Dorsolateral prefrontal cortex (tissue), 120 donors: ENCODE measurements at regions of chr1 and their contacts with region 1.

Region 1: GRCh38 chr1:177256153-177257075 is 85.7 kb downstream of the BRINP2 start:
- DNase-seq: peak in 9 of 10 donors; percentile 55 to 75 (median 65)
- H3K4me3 ChIP-seq: no peak overlapping the region
- H3K27ac ChIP-seq: peak overlapping the region in 37 of 59 donors; percentile 14 to 78 (median 48)
- H3K27me3 ChIP-seq: no peaks in the 10 kb centered on the region
- CTCF ChIP-seq: peak; percentile 28 to 91 (median 72)

Region 2: GRCh38 chr1:177302357-177303044 is 46.1 kb after region 1 on chr1:
- intact Hi-C with region 1: loop called (anchors 5 kb)
- DNase-seq: peak in 8 of 10 donors; percentile 54 to 77 (median 66)
- H3K4me3 ChIP-seq: no peak overlapping the region
- H3K27ac ChIP-seq: peak overlapping the region in 57 of 59 donors; percentile 11 to 98 (median 72)
- H3K27me3 ChIP-seq: no peaks in the 10 kb centered on the region
- CTCF ChIP-seq: peak in 10 of 56 donors; percentile 6 to 26 (median 19)

Region 3: DNA sequence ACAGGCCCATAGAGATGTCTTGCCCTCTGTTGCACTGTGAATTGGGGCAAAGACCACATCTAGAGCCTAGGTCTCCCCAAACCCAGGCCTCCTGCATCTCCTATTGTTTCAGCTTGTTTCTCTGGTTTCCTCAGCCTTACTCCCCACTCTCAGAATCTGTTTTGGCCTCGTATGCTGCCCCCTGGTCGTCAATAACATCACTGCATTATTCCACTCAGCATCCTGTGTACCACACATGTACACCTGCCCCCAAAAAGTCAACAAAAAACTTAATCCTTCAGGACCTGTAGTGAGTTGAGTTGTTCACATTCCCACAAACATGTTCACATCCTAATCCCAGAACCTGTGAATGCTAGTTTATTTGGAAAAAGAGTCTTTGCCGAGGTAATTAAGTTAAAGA is 99.2 kb after region 1 on chr1:
- intact Hi-C with region 1: loop called (anchors 1 to 2 kb)
- DNase-seq: peak in 6 of 10 donors; percentile 20 to 65 (median 37)
- H3K4me3 ChIP-seq: no peak overlapping the region
- H3K27ac ChIP-seq: peak overlapping the region in 16 of 59 donors; percentile 3 to 73 (median 48)
- H3K27me3 ChIP-seq: no peaks in the 10 kb centered on the region
- CTCF ChIP-seq: peak in 54 of 56 donors; percentile 34 to 81 (median 57)